ENCODE measurements at regions of chr5 and their contacts with region 1.

Region 1: GRCh38 chr5:149114403-149115312 is 26.6 kb upstream of the ABLIM3 start:
- DNase-seq: peak; percentile 77
- ATAC-seq: peak; percentile 98
- H3K4me3 ChIP-seq: no peak overlapping the region
- H3K27ac ChIP-seq: no peak overlapping the region
- H3K4me1 ChIP-seq: peaks cover 10 to 32% of the 10 kb centered on the region in 2 experiments; a peak in 3 of 4 replicates
- H3K27me3 ChIP-seq: no peaks in the 10 kb centered on the region
- CTCF ChIP-seq: peak; percentile 81 to 89 (median 82)
- POLR2A ChIP-seq: no peak
- RAD21 ChIP-seq: peak; percentile 97

Region 2: GRCh38 chr5:148740966-148741742 is 373.5 kb before region 1 on chr5:
- CTCF ChIA-PET with region 1: interaction called, 198 read pairs
- POLR2A ChIA-PET with region 1: no interaction called
- RAD21 ChIA-PET with region 1: interaction called, 16 to 19 read pairs
- intact Hi-C with region 1: loop called (anchors 2 kb)
- DNase-seq: peak; percentile 54
- ATAC-seq: peak; percentile 78
- H3K4me3 ChIP-seq: no peak overlapping the region
- H3K27ac ChIP-seq: no peak overlapping the region
- H3K4me1 ChIP-seq: no peaks in the 10 kb centered on the region
- H3K27me3 ChIP-seq: no peaks in the 10 kb centered on the region
- CTCF ChIP-seq: peak; percentile 63 to 83 (median 76)
- POLR2A ChIP-seq: no peak
- RAD21 ChIP-seq: peak; percentile 89

Region 3: GRCh38 chr5:148912714-148913398 is 201.8 kb before region 1 on chr5:
- CTCF ChIA-PET with region 1: interaction called, 18 read pairs
- POLR2A ChIA-PET with region 1: interaction called, 3 read pairs
- RAD21 ChIA-PET with region 1: interaction called, 6 read pairs
- intact Hi-C with region 1: loop called (anchors 1 kb)
- DNase-seq: peak; percentile 54
- ATAC-seq: peak; percentile 75
- H3K4me3 ChIP-seq: peak overlapping the region in 1 of 2 experiments; percentile 36; a peak in 1 of 4 replicates
- H3K27ac ChIP-seq: peak overlapping the region; percentile 19; the same call in 1 of the 2 replicates
- H3K4me1 ChIP-seq: peaks cover 21 to 65% of the 10 kb centered on the region in 2 experiments
- H3K27me3 ChIP-seq: no peaks in the 10 kb centered on the region
- CTCF ChIP-seq: peak; percentile 52 to 67 (median 58); a peak in 5 of 6 replicates
- POLR2A ChIP-seq: no peak
- RAD21 ChIP-seq: peak; percentile 82

Region 4: DNA sequence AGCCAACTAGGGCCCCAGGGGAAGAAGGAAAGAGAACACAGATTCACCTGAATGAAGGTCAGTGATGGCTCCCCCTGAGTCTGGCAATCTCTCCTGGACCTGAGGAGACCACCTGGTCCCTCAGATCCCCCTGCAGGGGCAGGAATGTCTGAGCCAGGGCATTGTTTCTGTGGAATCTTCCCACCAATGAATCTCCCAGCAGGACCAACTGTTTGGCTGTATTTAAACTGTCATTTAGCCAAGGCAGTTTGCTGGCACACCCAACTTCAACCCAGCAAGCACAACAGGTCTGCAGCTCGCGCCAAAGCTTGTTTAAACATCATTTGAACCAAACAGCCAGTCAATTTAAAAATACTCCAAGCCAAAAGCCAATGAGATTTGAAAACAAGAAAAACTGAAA is 144.4 kb before region 1 on chr5:
- CTCF ChIA-PET with region 1: interaction called, 12 read pairs
- POLR2A ChIA-PET with region 1: no interaction called
- RAD21 ChIA-PET with region 1: interaction called in 1 of 2 experiments, 7 read pairs
- intact Hi-C with region 1: loop called (anchors 2 kb)
- DNase-seq: no peak
- ATAC-seq: no peak
- H3K4me3 ChIP-seq: no peak overlapping the region
- H3K27ac ChIP-seq: no peak overlapping the region
- H3K4me1 ChIP-seq: peaks cover 20 to 70% of the 10 kb centered on the region in 2 experiments
- H3K27me3 ChIP-seq: no peaks in the 10 kb centered on the region
- CTCF ChIP-seq: no peak
- POLR2A ChIP-seq: no peak
- RAD21 ChIP-seq: no peak

Region 5: GRCh38 chr5:149035372-149035790 is 79.3 kb before region 1 on chr5:
- CTCF ChIA-PET with region 1: interaction called, 56 read pairs
- POLR2A ChIA-PET with region 1: no interaction called
- RAD21 ChIA-PET with region 1: interaction called, 19 to 24 read pairs
- intact Hi-C with region 1: loop called (anchors 1 kb)
- DNase-seq: peak; percentile 48
- ATAC-seq: peak; percentile 96
- H3K4me3 ChIP-seq: no peak overlapping the region
- H3K27ac ChIP-seq: no peak overlapping the region
- H3K4me1 ChIP-seq: peaks cover 0 to 14% of the 10 kb centered on the region in 2 experiments; a peak in 1 of 4 replicates
- H3K27me3 ChIP-seq: no peaks in the 10 kb centered on the region
- CTCF ChIP-seq: peak; percentile 89 to 92 (median 90)
- POLR2A ChIP-seq: no peak
- RAD21 ChIP-seq: peak; percentile 96

Region 6: GRCh38 chr5:149268928-149269557 is 154.4 kb after region 1 on chr5:
- CTCF ChIA-PET with region 1: interaction called, 10 read pairs
- POLR2A ChIA-PET with region 1: no interaction called
- RAD21 ChIA-PET with region 1: no interaction called
- intact Hi-C with region 1: no loop called
- DNase-seq: peak; percentile 55
- ATAC-seq: peak; percentile 26
- H3K4me3 ChIP-seq: no peak overlapping the region
- H3K27ac ChIP-seq: no peak overlapping the region
- H3K4me1 ChIP-seq: peaks cover 0 to 8% of the 10 kb centered on the region in 2 experiments; a peak in 2 of 4 replicates
- H3K27me3 ChIP-seq: no peaks in the 10 kb centered on the region
- CTCF ChIP-seq: peak; percentile 55 to 82 (median 69)
- POLR2A ChIP-seq: no peak
- RAD21 ChIP-seq: peak; percentile 82

Measured in HCT116 (cell line).